A673 (cell line): ENCODE measurements at regions of chr19 and their contacts with region 1.

Region 1: DNA sequence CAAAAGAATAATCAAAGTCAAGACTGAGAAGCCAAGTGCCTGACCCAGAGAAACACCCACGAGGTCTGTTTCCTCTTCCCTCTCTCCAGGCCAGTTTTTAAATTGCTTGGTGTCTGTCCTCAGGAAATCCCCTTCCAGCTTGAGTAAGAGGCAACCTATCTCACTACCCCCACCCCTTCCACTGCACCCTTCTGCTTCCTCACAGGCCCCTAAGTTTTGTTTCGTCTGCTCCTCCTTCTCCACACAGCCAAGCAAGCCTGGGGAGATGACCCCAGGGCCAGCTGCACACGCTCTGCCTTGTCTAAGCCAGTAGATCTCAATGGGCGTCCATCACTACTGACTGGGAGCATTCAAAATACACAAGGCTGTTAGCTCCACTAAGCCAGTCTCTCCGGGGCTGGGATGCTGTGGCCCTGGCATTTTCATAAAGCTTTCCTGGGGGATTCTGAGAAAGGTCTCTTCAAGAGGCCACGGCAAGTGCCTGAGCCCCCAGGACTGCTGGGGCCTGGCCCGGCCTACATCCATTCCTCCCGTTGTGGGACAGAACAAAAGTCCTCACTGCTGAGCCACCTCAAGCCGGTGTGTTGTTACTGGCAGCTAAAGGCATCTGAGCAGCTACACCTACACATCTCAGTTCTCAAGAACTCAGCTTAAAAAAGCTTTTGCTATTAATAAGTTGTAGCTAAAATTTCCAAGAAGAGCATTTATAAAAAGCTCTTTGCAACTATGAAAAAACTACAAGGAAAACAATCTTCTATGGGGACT is 14.9 kb upstream of the IL4I1 start:
- DNase-seq: no peak
- H3K4me3 ChIP-seq: no peak overlapping the region
- H3K27ac ChIP-seq: no peak overlapping the region
- H3K4me1 ChIP-seq: no peaks in the 10 kb centered on the region
- H3K27me3 ChIP-seq: no peaks in the 10 kb centered on the region
- CTCF ChIP-seq: no peak

Region 2: GRCh38 chr19:49889687-49890348 is 21.7 kb before region 1 on chr19:
- CTCF ChIA-PET with region 1: interaction called, 4 read pairs
- POLR2A ChIA-PET with region 1: interaction called, 11 read pairs
- intact Hi-C with region 1: no loop called
- DNase-seq: peak; percentile 85
- H3K4me3 ChIP-seq: peak overlapping the region; percentile 20
- H3K27ac ChIP-seq: no peak overlapping the region
- H3K4me1 ChIP-seq: no peaks in the 10 kb centered on the region
- H3K27me3 ChIP-seq: no peaks in the 10 kb centered on the region
- CTCF ChIP-seq: peak; percentile 88

Region 3: GRCh38 chr19:49896863-49897621 is 14.5 kb before region 1 on chr19 and contains the start of gene IL4I1:
- CTCF ChIA-PET with region 1: interaction called, 4 read pairs
- POLR2A ChIA-PET with region 1: interaction called, 15 read pairs
- intact Hi-C with region 1: no loop called
- DNase-seq: no peak
- H3K4me3 ChIP-seq: no peak within 1 kb of the TSS
- H3K27ac ChIP-seq: no peak within 1 kb of the TSS
- H3K4me1 ChIP-seq: no peaks in the 10 kb centered on the region
- H3K27me3 ChIP-seq: no peaks in the 10 kb centered on the region
- CTCF ChIP-seq: no peak
- total RNA-seq, gene IL4I1: 1.3 TPM in 2 replicates